Caco-2 (cell line): ENCODE measurements at regions of chr3 and their contacts with region 1.

Region 1: DNA sequence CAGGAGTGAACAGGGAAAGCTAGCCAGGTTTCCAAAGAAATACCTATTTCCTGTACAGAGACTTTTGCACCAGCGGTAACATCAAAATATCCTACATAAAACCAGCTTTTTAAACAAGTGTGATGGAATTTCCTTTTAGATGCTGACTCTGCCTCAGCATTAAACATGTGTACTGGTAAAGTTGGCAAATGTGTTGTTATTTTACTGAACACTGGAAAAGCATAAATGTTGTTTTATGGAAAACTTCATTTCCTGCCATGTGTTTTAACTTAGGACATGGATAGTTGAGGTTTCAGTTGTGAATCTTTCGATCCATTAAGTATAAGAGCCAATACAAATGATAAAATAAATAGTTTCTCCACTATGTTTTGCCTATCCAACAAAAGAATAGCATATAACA is 15.7 kb downstream of the OXNAD1 start:
- DNase-seq: no peak
- H3K4me3 ChIP-seq: no peak overlapping the region
- H3K4me3 Mint-ChIP-seq: no peak overlapping the region
- H3K27ac Mint-ChIP-seq: no peak overlapping the region
- H3K4me1 ChIP-seq: no peaks in the 10 kb centered on the region
- H3K4me1 Mint-ChIP-seq: no peaks in the 10 kb centered on the region
- H3K27me3 ChIP-seq: no peaks in the 10 kb centered on the region
- H3K27me3 Mint-ChIP-seq: no peaks in the 10 kb centered on the region
- CTCF ChIP-seq: no peak

Region 2: GRCh38 chr3:16264708-16265454 is 15.8 kb before region 1 on chr3 and contains the starts of genes DPH3 and OXNAD1:
- CTCF ChIA-PET with region 1: no interaction called
- POLR2A ChIA-PET with region 1: interaction called, 12 read pairs
- intact Hi-C with region 1: no loop called
- DNase-seq: peak; percentile 99
- H3K4me3 ChIP-seq: peak within 1 kb of the TSS; percentile 76
- H3K4me3 Mint-ChIP-seq: peak within 1 kb of the TSS; percentile 76
- H3K27ac Mint-ChIP-seq: peak within 1 kb of the TSS; percentile 71
- H3K4me1 ChIP-seq: peaks cover 5% of the 10 kb centered on the region
- H3K4me1 Mint-ChIP-seq: peaks cover 14% of the 10 kb centered on the region
- H3K27me3 ChIP-seq: no peaks in the 10 kb centered on the region
- H3K27me3 Mint-ChIP-seq: no peaks in the 10 kb centered on the region
- CTCF ChIP-seq: no peak
- total RNA-seq, gene DPH3: 25.6 and 30.0 TPM in 2 replicates
- total RNA-seq, gene OXNAD1: 20.0 and 22.9 TPM in 2 replicates